Gastrocnemius medialis (tissue), 4 donors: ENCODE measurements at regions of chr6 and their contacts with region 1.

Region 1: GRCh38 chr6:161393839-161394364 is 120.0 kb upstream of the AGPAT4 start:
- DNase-seq: peak; percentile 38 to 56
- ATAC-seq: peak; percentile 92 to 99
- H3K4me3 ChIP-seq: peak overlapping the region in 3 of 4 donors; percentile 26 to 36 (median 27)
- H3K27ac ChIP-seq: peak overlapping the region in 1 of 4 donors; percentile 17
- H3K4me1 ChIP-seq: peaks cover 9 to 18% of the 10 kb centered on the region in 2 donors
- H3K27me3 ChIP-seq: no peaks in the 10 kb centered on the region
- CTCF ChIP-seq: peak; percentile 66 to 76 (median 68)
- POLR2A ChIP-seq: no peak

Region 2: DNA sequence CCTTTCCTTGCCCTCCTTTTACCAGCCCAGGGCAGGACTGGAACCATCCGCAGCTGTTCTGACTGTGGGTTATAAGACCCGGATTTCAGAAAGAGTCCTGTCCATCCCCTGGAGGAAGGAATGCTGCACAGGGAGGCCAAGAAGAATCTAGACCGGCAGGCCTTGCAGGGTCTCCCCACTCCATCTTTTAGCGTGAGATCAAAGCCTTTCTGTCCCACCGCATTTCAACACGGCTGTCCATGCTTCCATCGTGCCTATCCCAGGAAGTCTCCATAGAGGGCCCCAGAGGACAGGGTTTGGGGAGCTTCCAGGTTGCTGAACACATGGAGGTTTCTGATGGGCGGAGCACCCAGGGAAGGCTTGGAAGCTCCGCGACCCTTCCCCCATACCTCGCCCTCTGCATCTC is 40.7 kb before region 1 on chr6:
- in situ Hi-C with region 1: no loop called
- intact Hi-C with region 1: no loop called
- DNase-seq: no peak
- ATAC-seq: no peak
- H3K4me3 ChIP-seq: no peak overlapping the region
- H3K27ac ChIP-seq: no peak overlapping the region
- H3K4me1 ChIP-seq: no peaks in the 10 kb centered on the region
- H3K27me3 ChIP-seq: no peaks in the 10 kb centered on the region
- CTCF ChIP-seq: no peak
- POLR2A ChIP-seq: no peak

Region 3: GRCh38 chr6:161444464-161444863 is 50.6 kb after region 1 on chr6:
- in situ Hi-C with region 1: no loop called
- intact Hi-C with region 1: loop called (anchors 2 kb)
- DNase-seq: peak; percentile 28 to 42
- ATAC-seq: peak; percentile 69 to 80
- H3K4me3 ChIP-seq: peak overlapping the region in 1 of 4 donors; percentile 11
- H3K27ac ChIP-seq: peak overlapping the region; percentile 32 to 67 (median 50)
- H3K4me1 ChIP-seq: peaks cover 5 to 15% of the 10 kb centered on the region in 2 donors
- H3K27me3 ChIP-seq: no peaks in the 10 kb centered on the region
- CTCF ChIP-seq: peak in 2 of 5 experiments; percentile 31 to 37
- POLR2A ChIP-seq: no peak

Region 4: GRCh38 chr6:161498359-161498758 is 104.5 kb after region 1 on chr6:
- in situ Hi-C with region 1: loop called in 1 of 4 experiments (anchors 5 kb)
- intact Hi-C with region 1: loop called (anchors 1 kb)
- DNase-seq: peak; percentile 27 to 53
- ATAC-seq: peak; percentile 77 to 90
- H3K4me3 ChIP-seq: no peak overlapping the region
- H3K27ac ChIP-seq: peak overlapping the region in 2 of 4 donors; percentile 9 to 33
- H3K4me1 ChIP-seq: no peaks in the 10 kb centered on the region
- H3K27me3 ChIP-seq: no peaks in the 10 kb centered on the region
- CTCF ChIP-seq: peak; percentile 35 to 63 (median 60)
- POLR2A ChIP-seq: no peak

Region 5: GRCh38 chr6:161694995-161695394 is 301.1 kb after region 1 on chr6:
- in situ Hi-C with region 1: no loop called
- intact Hi-C with region 1: loop called (anchors 5 kb)
- DNase-seq: no peak
- ATAC-seq: no peak
- H3K4me3 ChIP-seq: no peak overlapping the region
- H3K27ac ChIP-seq: no peak overlapping the region
- H3K4me1 ChIP-seq: peaks cover 0 to 8% of the 10 kb centered on the region in 2 donors
- H3K27me3 ChIP-seq: no peaks in the 10 kb centered on the region
- CTCF ChIP-seq: peak in 2 of 5 experiments; percentile 9 to 24
- POLR2A ChIP-seq: no peak